Tibial artery (tissue), 4 donors: ENCODE measurements at regions of chr9 and their contacts with region 1.

Region 1: DNA sequence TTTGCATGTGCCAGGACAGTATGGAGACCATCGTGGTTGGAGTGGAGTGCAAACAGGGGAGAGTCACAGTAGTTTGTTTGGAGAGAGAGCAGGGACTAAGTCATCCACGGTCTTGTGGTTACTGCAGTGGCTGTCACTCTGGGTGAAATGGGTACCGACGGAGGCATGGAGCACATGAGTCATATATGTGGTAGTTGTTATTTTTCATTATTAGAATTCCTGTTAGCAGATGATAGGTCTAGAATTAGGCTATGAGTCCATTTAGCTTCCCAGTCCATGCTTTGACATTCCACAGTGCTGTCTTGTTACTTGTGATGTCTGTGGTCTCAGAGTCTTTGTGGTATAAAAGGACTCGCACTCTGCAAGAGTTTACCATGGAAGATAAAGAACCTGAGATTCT is 303.9 kb downstream of the DMRT2 start:
- DNase-seq: no peak
- H3K4me3 ChIP-seq: no peak overlapping the region
- H3K27ac ChIP-seq: no peak overlapping the region
- H3K4me1 ChIP-seq: no peaks in the 10 kb centered on the region
- H3K27me3 ChIP-seq: no peaks in the 10 kb centered on the region
- CTCF ChIP-seq: no peak

Region 2: GRCh38 chr9:1337161-1337560 is 16.9 kb before region 1 on chr9:
- intact Hi-C with region 1: loop called (anchors 1 kb)
- DNase-seq: no peak
- H3K4me3 ChIP-seq: no peak overlapping the region
- H3K27ac ChIP-seq: no peak overlapping the region
- H3K4me1 ChIP-seq: no peaks in the 10 kb centered on the region
- H3K27me3 ChIP-seq: no peaks in the 10 kb centered on the region
- CTCF ChIP-seq: no peak